AG04449 (cell line): ENCODE measurements at regions of chr18 and their contacts with region 1.

Region 1: GRCh38 chr18:27750014-27750413 is 426.9 kb downstream of the CDH2 start:
- DNase-seq: peak; percentile 58
- H3K4me3 ChIP-seq: no peak overlapping the region
- CTCF ChIP-seq: peak; percentile 87

Region 2: DNA sequence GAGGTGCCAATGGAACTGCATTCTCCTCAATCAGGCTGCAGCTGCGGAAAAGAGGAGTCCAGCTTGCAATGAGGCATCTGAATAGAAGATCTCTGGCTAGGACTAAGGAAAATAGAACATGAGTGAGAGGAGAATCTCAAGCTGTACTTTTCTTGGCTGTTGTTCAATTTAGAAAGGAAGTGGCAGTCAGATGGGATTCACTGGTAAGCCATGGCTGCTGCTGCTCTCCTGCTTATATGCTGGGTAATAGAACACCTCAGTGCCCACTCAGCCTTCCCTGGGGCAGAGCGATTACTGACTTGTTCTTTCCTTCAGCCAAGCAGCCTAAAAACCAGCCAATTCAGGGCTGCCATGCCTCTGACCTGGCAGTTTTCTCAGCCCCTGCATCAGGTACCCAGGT is 547.3 kb before region 1 on chr18:
- CTCF ChIA-PET with region 1: no interaction called
- POLR2A ChIA-PET with region 1: no interaction called
- DNase-seq: no peak
- H3K4me3 ChIP-seq: no peak overlapping the region
- CTCF ChIP-seq: no peak

Region 3: DNA sequence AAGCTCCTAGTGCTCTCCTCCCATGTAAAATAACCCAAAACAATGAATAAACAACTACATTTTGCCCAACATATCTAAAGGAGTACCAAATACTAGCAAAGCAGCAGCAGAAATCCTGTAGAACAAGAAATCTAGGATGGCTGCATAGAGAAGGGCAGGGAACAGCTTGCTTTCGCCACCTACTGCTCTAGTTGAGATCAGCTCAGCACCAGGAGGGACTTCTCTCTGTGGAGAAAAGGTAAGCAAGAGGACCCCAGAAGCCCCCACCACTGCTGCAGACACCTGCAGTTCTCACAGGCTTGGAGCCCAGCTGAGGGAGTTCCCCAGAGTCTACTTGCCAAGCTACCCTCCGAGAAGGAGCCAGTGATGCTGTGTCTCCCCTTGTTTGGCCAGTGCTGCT is 321.9 kb before region 1 on chr18:
- CTCF ChIA-PET with region 1: no interaction called
- POLR2A ChIA-PET with region 1: no interaction called
- DNase-seq: no peak
- H3K4me3 ChIP-seq: no peak overlapping the region
- CTCF ChIP-seq: no peak

Region 4: GRCh38 chr18:27579363-27579762 is 170.7 kb before region 1 on chr18:
- CTCF ChIA-PET with region 1: no interaction called
- POLR2A ChIA-PET with region 1: no interaction called
- DNase-seq: no peak
- H3K4me3 ChIP-seq: no peak overlapping the region
- CTCF ChIP-seq: no peak

Region 5: GRCh38 chr18:27599202-27599829 is 150.7 kb before region 1 on chr18:
- CTCF ChIA-PET with region 1: interaction called, 300 read pairs
- POLR2A ChIA-PET with region 1: no interaction called
- DNase-seq: no peak
- H3K4me3 ChIP-seq: no peak overlapping the region
- CTCF ChIP-seq: peak; percentile 89

Region 6: DNA sequence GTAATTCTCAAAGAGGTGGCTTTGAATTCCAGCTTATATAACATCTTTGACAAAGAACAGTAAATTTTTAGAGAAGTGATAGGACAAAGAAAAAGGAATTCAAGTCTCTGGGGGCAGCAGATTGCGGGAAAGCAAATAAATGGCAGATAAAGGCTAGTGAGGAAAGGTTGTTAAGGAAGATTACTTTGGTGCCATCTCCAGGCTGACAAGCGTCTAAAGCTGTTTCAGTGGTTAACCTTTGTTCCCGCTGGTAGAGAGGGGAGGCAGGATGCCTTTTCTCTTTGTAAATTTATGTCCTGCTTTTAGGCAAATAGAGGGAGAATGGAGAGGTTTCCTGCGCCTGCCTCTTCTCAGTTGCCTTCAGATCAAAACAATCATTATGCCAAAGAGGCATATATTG is 133.7 kb before region 1 on chr18:
- CTCF ChIA-PET with region 1: interaction called, 21 read pairs
- POLR2A ChIA-PET with region 1: no interaction called
- DNase-seq: no peak
- H3K4me3 ChIP-seq: no peak overlapping the region
- CTCF ChIP-seq: no peak

Region 7: GRCh38 chr18:27728659-27729058 is 21.4 kb before region 1 on chr18:
- CTCF ChIA-PET with region 1: interaction called, 14 read pairs
- POLR2A ChIA-PET with region 1: no interaction called
- DNase-seq: no peak
- H3K4me3 ChIP-seq: no peak overlapping the region
- CTCF ChIP-seq: no peak

Region 8: GRCh38 chr18:27762054-27762453 is 12.0 kb after region 1 on chr18:
- CTCF ChIA-PET with region 1: interaction called, 31 read pairs
- POLR2A ChIA-PET with region 1: no interaction called
- DNase-seq: no peak
- H3K4me3 ChIP-seq: no peak overlapping the region
- CTCF ChIP-seq: no peak